Heart left ventricle (tissue), 16 donors: ENCODE measurements at regions of chr11 and their contacts with region 1.

Region 1: GRCh38 chr11:89487016-89487415 is 4.2 kb downstream of the NOX4 start:
- DNase-seq: no peak
- ATAC-seq: no peak
- H3K4me3 ChIP-seq: no peak overlapping the region
- H3K27ac ChIP-seq: no peak overlapping the region
- H3K4me1 ChIP-seq: peaks cover 0 to 13% (median 0%) of the 10 kb centered on the region in 12 donors
- H3K27me3 ChIP-seq: peaks cover 0 to 17% (median 0%) of the 10 kb centered on the region in 9 donors
- CTCF ChIP-seq: no peak
- POLR2A ChIP-seq: no peak

Region 2: DNA sequence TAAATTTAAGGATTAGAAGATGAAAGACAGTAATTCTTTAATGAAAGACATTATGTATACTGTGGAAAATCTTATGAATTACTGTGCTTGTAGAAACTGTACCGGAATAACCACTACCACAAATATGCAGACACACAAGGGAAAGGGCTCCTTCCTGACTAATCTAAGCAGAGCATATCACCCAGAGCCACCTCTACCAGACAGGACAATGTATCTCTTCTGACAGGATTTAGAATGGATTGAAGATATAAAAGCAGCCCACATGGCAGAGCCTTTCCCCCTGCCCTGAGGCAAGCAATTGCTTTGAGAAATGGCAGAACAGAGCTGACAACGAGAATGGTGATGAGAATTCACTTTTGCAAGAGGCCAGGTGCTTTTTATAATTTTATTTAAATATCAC is 139.9 kb before region 1 on chr11:
- intact Hi-C with region 1: loop called in 1 of 10 experiments (anchors 10 kb)
- DNase-seq: no peak
- ATAC-seq: no peak
- H3K4me3 ChIP-seq: no peak overlapping the region
- H3K27ac ChIP-seq: no peak overlapping the region
- H3K4me1 ChIP-seq: peaks cover 0 to 7% (median 0%) of the 10 kb centered on the region in 12 donors
- H3K27me3 ChIP-seq: no peaks in the 10 kb centered on the region
- CTCF ChIP-seq: no peak
- POLR2A ChIP-seq: no peak

Region 3: DNA sequence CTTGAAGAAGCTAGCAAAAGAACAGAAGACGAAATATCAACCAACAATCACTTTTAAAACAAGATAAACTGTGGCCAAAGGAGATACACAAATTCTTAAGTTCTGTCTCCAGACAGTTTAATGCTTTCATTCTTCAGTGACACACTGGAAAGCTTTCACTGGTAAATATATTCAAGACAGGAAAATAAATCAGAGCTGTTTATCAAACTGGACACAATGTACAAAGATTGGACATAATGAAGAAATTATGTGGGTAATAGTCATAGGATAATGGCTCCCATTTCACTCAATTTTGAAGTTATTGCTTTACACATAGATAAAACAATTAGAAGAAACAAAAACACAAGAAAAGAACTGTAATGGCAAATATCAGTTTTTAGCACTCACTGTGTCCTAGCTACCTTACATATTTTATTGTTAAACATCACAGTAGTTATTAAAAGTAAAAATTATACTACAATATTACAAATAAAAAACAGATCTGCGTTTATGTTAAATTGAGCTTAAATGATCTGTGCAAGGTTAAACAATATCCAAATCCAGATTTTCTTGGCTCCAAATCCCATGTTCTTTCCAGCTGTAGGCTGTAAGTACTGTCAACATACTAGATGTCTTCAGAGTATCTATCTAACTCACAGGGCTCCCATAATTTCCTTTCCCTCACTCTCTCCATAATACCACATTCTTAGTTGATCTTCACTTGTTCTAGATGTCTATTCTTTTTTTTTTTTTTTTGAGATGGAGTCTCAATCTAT is 42.8 kb after region 1 on chr11:
- intact Hi-C with region 1: no loop called
- DNase-seq: no peak
- ATAC-seq: no peak
- H3K4me3 ChIP-seq: no peak overlapping the region
- H3K27ac ChIP-seq: no peak overlapping the region
- H3K4me1 ChIP-seq: no peaks in the 10 kb centered on the region
- H3K27me3 ChIP-seq: no peaks in the 10 kb centered on the region
- CTCF ChIP-seq: no peak
- POLR2A ChIP-seq: no peak